Testis (tissue), 5 donors: ENCODE measurements at regions of chr1 and their contacts with region 1.

Region 1: DNA sequence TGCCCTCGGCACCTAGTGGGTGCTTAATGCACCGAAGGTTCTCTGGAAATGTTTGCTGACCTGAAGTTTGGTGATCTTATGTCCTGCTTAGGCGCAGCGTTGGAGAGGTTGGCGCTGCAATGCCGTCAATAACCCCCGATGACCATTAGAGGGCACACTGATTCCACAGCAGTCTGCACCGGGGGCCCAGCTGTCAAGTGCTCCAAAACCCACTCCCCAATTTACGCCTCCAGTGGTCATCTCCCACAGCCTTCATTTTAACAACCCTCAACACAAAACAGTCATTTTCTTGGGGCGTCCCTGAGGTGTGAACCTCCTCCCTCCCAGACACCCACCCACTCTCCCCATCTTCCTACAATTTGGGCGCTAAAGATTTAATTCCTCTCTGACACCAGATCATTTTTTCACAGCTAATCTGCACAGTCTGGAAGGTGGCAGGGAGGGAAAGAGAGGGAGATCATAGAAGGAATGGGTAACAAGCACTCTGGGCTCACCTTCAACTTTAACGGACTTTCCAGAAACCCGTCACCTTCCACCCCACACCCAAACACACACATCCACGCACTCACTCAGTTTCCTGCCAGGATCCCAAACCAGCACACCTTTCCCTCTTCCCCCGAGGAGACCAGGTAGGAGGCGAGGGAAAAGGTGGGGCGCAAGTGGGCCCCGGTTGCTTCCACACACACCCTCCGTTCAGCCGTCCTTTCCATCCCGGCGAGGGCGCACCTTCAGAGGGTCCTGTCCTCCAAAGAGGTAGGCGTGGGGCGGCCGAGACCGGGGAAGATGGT is 576 bp upstream of the NPR1 start:
- DNase-seq: peak; percentile 68
- H3K4me3 ChIP-seq: peak overlapping the region; percentile 38 to 49
- H3K27ac ChIP-seq: no peak overlapping the region
- H3K4me1 ChIP-seq: peaks cover 15% of the 10 kb centered on the region
- H3K27me3 ChIP-seq: no peaks in the 10 kb centered on the region
- CTCF ChIP-seq: peak; percentile 62 to 85 (median 82)
- POLR2A ChIP-seq: no peak

Region 2: GRCh38 chr1:153749408-153750005 is 71.6 kb after region 1 on chr1:
- intact Hi-C with region 1: loop called (anchors 5 kb)
- DNase-seq: peak; percentile 90
- H3K4me3 ChIP-seq: no peak overlapping the region
- H3K27ac ChIP-seq: peak overlapping the region; percentile 28 to 89
- H3K4me1 ChIP-seq: peaks cover 33% of the 10 kb centered on the region
- H3K27me3 ChIP-seq: no peaks in the 10 kb centered on the region
- CTCF ChIP-seq: peak; percentile 71 to 84 (median 79)
- POLR2A ChIP-seq: no peak

Region 3: DNA sequence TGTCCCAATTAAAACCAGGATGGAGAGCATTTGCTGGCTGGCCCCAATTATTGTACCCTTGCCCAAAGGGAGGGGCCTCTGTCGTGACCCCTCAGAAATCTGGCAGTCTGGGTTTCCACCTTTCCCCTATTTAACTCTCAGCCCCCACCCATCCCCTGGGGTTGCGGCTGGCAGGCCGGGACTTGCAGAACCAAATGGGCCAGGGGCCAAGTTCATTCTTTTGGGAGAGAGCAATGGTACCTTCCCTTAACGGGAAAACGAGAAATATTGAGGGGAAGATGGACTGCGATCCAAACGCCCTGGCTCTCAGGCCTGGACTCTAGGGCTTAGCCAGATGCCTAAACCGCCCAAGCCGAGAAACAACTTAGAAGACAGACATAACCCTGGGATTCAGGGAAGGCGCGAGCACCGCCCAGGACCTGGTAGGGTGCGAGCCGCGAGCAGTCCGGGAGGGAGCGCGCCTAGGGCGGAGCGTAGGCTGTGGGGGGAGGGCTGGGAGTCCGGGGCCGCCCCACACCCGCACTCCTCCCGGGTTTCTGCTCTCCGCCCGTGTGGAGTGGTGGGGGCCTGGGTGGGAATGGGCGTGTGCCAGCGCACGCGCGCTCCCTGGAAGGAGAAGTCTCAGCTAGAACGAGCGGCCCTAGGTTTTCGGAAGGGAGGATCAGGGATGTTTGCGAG is 97.0 kb after region 1 on chr1 and contains the start of gene SLC27A3:
- intact Hi-C with region 1: loop called (anchors 5 kb)
- DNase-seq: peak; percentile 84
- H3K4me3 ChIP-seq: peak within 1 kb of the TSS; percentile 55 to 68
- H3K27ac ChIP-seq: peak within 1 kb of the TSS; percentile 61 to 87
- H3K4me1 ChIP-seq: peaks cover 36% of the 10 kb centered on the region
- H3K27me3 ChIP-seq: no peaks in the 10 kb centered on the region
- CTCF ChIP-seq: no peak
- POLR2A ChIP-seq: no peak
- total RNA-seq, gene SLC27A3: 38.5 to 54.9 TPM